Ovary (tissue), 10 donors: ENCODE measurements at regions of chr11 and their contacts with region 1.

Region 1: GRCh38 chr11:95150946-95151684 is 61.5 kb downstream of the ENDOD1 start:
- DNase-seq: peak; percentile 92 to 95 (median 94)
- H3K4me3 ChIP-seq: peak overlapping the region; percentile 67
- H3K27ac ChIP-seq: peak overlapping the region; percentile 65 to 82
- H3K4me1 ChIP-seq: peaks cover 6% of the 10 kb centered on the region
- H3K27me3 ChIP-seq: no peaks in the 10 kb centered on the region
- CTCF ChIP-seq: peak; percentile 90 to 96 (median 93)
- EP300 ChIP-seq: no peak
- POLR2A ChIP-seq: peak; percentile 75

Region 2: DNA sequence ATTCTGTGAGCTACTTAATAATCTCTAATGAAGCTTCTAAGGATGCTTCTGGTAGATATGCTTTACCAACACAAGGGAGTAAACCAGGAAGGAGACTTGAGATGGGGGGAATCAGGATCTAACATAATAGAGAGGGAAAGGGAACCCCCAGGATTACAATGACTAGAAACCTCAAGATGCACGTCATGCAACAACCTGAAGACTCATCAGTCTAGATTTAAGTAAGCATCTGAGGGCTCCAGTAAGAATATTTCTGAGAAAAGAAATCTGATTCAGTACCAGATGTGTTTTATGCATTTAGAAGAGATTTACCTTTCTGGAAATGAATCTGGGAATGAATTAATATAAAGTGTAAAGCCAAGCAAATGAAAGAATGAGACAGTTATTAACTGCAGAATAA is 162.4 kb before region 1 on chr11:
- intact Hi-C with region 1: loop called in 1 of 4 experiments (anchors 10 kb)
- DNase-seq: no peak
- H3K4me3 ChIP-seq: no peak overlapping the region
- H3K27ac ChIP-seq: no peak overlapping the region
- H3K4me1 ChIP-seq: no peaks in the 10 kb centered on the region
- H3K27me3 ChIP-seq: no peaks in the 10 kb centered on the region
- CTCF ChIP-seq: no peak
- EP300 ChIP-seq: no peak
- POLR2A ChIP-seq: no peak

Region 3: GRCh38 chr11:95089620-95090542 is 61.2 kb before region 1 on chr11 and contains the start of gene ENDOD1:
- intact Hi-C with region 1: loop called in 2 of 4 experiments (anchors 10 kb)
- DNase-seq: peak; percentile 77 to 89 (median 83)
- H3K4me3 ChIP-seq: peak within 1 kb of the TSS; percentile 88
- H3K27ac ChIP-seq: peak within 1 kb of the TSS; percentile 77 to 96
- H3K4me1 ChIP-seq: peaks cover 4% of the 10 kb centered on the region
- H3K27me3 ChIP-seq: no peaks in the 10 kb centered on the region
- CTCF ChIP-seq: peak in 1 of 3 donors; percentile 31
- EP300 ChIP-seq: no peak
- POLR2A ChIP-seq: peak; percentile 50
- total RNA-seq, gene ENDOD1: 21.0 to 35.4 (median 34.3) TPM

Region 4: GRCh38 chr11:95705485-95706124 is 554.5 kb after region 1 on chr11:
- intact Hi-C with region 1: loop called (anchors 1 to 5 kb)
- DNase-seq: peak; percentile 88 to 93 (median 89)
- H3K4me3 ChIP-seq: peak overlapping the region; percentile 1
- H3K27ac ChIP-seq: peak overlapping the region; percentile 52 to 73
- H3K4me1 ChIP-seq: peaks cover 10% of the 10 kb centered on the region
- H3K27me3 ChIP-seq: no peaks in the 10 kb centered on the region
- CTCF ChIP-seq: peak; percentile 80 to 96 (median 87)
- EP300 ChIP-seq: no peak
- POLR2A ChIP-seq: no peak